ENCODE measurements at regions of chr9 and their contacts with region 1.

Region 1: GRCh38 chr9:113895526-113895925 is 19.4 kb downstream of the ZNF618 start:
- DNase-seq: no peak
- ATAC-seq: no peak
- H3K4me3 ChIP-seq: no peak overlapping the region
- H3K27ac ChIP-seq: no peak overlapping the region
- H3K4me1 ChIP-seq: no peaks in the 10 kb centered on the region
- H3K27me3 ChIP-seq: no peaks in the 10 kb centered on the region
- CTCF ChIP-seq: no peak
- POLR2A ChIP-seq: no peak
- RAD21 ChIP-seq: no peak

Region 2: GRCh38 chr9:113837334-113837733 is 58.2 kb before region 1 on chr9:
- CTCF ChIA-PET with region 1: no interaction called
- POLR2A ChIA-PET with region 1: no interaction called
- RAD21 ChIA-PET with region 1: no interaction called
- intact Hi-C with region 1: loop called (anchors 10 kb)
- DNase-seq: no peak
- ATAC-seq: no peak
- H3K4me3 ChIP-seq: no peak overlapping the region
- H3K27ac ChIP-seq: no peak overlapping the region
- H3K4me1 ChIP-seq: no peaks in the 10 kb centered on the region
- H3K27me3 ChIP-seq: no peaks in the 10 kb centered on the region
- CTCF ChIP-seq: no peak
- POLR2A ChIP-seq: no peak
- RAD21 ChIP-seq: no peak

Region 3: DNA sequence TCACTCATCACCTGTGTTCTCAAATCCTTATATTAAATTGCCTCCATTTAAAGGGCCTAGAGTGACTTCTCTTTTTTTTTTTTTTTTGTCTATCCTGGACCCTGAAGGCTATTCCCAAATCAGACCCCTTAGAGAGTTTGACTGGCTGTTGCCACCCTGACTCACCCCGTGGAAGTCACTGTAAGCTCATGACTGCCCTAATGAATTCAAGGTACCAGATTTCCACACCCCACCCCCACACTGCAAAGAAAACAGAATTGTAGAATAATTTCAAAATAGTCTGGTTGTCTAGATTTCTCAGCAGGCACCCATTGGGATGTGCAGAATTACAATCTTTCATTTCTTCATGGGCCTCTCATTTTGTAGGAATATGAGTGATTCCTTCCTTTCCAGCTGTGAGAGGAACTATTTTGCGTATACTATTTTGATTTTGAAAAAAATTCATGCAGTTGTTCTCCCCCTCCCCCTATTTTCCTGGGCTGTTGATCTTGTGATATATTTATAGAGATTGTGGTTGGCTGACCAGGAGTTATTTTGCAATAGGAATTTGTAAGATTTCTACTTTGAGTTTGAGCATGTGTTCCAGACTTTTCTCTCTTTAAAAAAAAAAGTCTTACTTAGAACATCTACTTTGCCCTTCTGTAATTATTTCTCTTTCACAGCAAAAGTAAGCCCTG is 59.7 kb after region 1 on chr9:
- CTCF ChIA-PET with region 1: no interaction called
- POLR2A ChIA-PET with region 1: no interaction called
- RAD21 ChIA-PET with region 1: no interaction called
- intact Hi-C with region 1: no loop called
- DNase-seq: no peak
- ATAC-seq: no peak
- H3K4me3 ChIP-seq: no peak overlapping the region
- H3K27ac ChIP-seq: no peak overlapping the region
- H3K4me1 ChIP-seq: peaks cover 8 to 9% of the 10 kb centered on the region in 2 experiments
- H3K27me3 ChIP-seq: no peaks in the 10 kb centered on the region
- CTCF ChIP-seq: no peak
- POLR2A ChIP-seq: no peak
- RAD21 ChIP-seq: no peak

Region 4: DNA sequence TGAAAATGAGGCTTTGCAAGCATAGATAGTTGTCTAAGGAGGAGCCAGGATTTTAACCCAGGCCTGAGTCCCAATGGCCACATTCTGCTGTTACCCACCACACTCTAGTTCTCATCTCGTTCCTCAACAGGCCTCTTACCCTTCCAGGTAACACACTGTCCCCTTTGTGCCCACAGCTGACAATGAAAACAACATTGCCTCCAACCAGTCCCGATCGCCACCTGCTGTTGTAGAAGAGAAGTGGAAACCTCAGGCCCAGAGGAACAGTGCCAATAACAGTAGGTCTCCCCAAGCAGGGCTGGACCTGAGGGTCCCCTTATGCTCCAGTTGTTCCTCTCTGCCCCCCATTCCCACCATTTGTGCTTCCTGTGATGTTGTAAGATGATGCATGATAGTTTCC is 152.2 kb after region 1 on chr9:
- CTCF ChIA-PET with region 1: no interaction called
- POLR2A ChIA-PET with region 1: no interaction called
- RAD21 ChIA-PET with region 1: no interaction called
- intact Hi-C with region 1: no loop called
- DNase-seq: peak; percentile 16
- ATAC-seq: peak; percentile 92
- H3K4me3 ChIP-seq: no peak overlapping the region
- H3K27ac ChIP-seq: no peak overlapping the region
- H3K4me1 ChIP-seq: no peaks in the 10 kb centered on the region
- H3K27me3 ChIP-seq: no peaks in the 10 kb centered on the region
- CTCF ChIP-seq: peak; percentile 55 to 63 (median 61)
- POLR2A ChIP-seq: no peak
- RAD21 ChIP-seq: peak; percentile 65